IMR-90 (cell line): ENCODE measurements at regions of chr1 and their contacts with region 1.

Region 1: GRCh38 chr1:77553568-77554291 is 128.7 kb downstream of the ZZZ3 start:
- DNase-seq: no peak
- ATAC-seq: no peak
- H3K4me3 ChIP-seq: no peak overlapping the region
- H3K27ac ChIP-seq: no peak overlapping the region
- H3K4me1 ChIP-seq: peaks cover 7% of the 10 kb centered on the region
- H3K27me3 ChIP-seq: no peaks in the 10 kb centered on the region
- CTCF ChIP-seq: no peak
- POLR2A ChIP-seq: no peak
- RAD21 ChIP-seq: no peak

Region 2: GRCh38 chr1:77538956-77539518 is 14.7 kb before region 1 on chr1:
- CTCF ChIA-PET with region 1: no interaction called
- POLR2A ChIA-PET with region 1: interaction called, 15 read pairs
- dilution Hi-C with region 1: no loop called
- in situ Hi-C with region 1: no loop called
- intact Hi-C with region 1: no loop called
- DNase-seq: peak; percentile 93
- ATAC-seq: peak; percentile 78
- H3K4me3 ChIP-seq: no peak overlapping the region
- H3K27ac ChIP-seq: peak overlapping the region; percentile 84
- H3K4me1 ChIP-seq: peaks cover 23% of the 10 kb centered on the region
- H3K27me3 ChIP-seq: no peaks in the 10 kb centered on the region
- CTCF ChIP-seq: no peak
- POLR2A ChIP-seq: no peak
- RAD21 ChIP-seq: no peak